ENCODE measurements at regions of chr1 and their contacts with region 1.

Region 1: DNA sequence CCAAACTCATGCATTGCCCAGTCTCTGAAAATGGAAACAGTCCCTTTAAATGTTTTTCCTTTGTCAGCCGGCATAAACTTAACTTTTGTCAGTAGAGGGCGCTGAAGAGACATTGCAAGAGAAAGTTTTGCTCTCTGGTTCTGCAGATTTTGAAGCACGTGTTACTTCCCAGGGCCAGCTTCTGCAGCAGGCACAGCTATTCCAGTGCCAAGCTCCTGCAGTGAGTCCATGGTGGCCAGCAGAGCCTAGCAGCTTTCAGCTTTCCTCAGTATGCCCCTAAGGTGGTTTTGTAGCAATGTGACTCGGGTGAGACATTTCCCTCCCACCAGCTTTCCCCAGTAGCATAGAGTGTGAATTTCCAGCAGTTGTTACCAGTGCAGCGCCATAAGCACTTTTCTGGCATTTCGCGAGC is 2.6 kb upstream of the IFI44L start:
- H3K4me3 Mint-ChIP-seq: no peak overlapping the region
- H3K27ac Mint-ChIP-seq: no peak overlapping the region
- H3K4me1 Mint-ChIP-seq: peaks cover 24% of the 10 kb centered on the region
- H3K27me3 Mint-ChIP-seq: no peaks in the 10 kb centered on the region

Region 2: GRCh38 chr1:78577257-78578100 is 40.1 kb before region 1 on chr1:
- intact Hi-C with region 1: no loop called
- H3K4me3 Mint-ChIP-seq: no peak overlapping the region
- H3K27ac Mint-ChIP-seq: no peak overlapping the region
- H3K4me1 Mint-ChIP-seq: no peaks in the 10 kb centered on the region
- H3K27me3 Mint-ChIP-seq: no peaks in the 10 kb centered on the region

Region 3: DNA sequence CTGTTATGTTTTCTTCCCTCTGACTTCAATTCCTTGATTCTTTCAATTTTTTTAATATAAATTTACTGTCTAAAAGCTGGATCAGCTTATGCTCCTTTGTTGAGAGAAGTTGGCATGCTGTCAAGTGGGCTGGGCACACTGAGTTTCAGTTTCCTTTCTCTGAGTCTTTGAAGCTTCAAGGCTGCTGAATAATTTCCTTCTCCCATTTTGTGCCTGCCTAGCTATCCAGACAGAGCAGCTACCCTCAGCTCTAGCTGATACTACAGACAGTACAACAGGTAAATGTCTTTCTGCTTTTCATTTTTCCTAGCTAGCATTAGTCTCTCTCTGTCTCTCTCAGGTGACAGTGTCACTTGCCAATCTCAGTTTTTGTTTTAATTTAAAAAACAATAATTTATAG is 32.0 kb after region 1 on chr1 and contains the start of gene IFI44:
- intact Hi-C with region 1: loop called (anchors 5 kb)
- H3K4me3 Mint-ChIP-seq: peak within 1 kb of the TSS; percentile 72
- H3K27ac Mint-ChIP-seq: peak within 1 kb of the TSS; percentile 74
- H3K4me1 Mint-ChIP-seq: peaks cover 49% of the 10 kb centered on the region
- H3K27me3 Mint-ChIP-seq: no peaks in the 10 kb centered on the region

Region 4: DNA sequence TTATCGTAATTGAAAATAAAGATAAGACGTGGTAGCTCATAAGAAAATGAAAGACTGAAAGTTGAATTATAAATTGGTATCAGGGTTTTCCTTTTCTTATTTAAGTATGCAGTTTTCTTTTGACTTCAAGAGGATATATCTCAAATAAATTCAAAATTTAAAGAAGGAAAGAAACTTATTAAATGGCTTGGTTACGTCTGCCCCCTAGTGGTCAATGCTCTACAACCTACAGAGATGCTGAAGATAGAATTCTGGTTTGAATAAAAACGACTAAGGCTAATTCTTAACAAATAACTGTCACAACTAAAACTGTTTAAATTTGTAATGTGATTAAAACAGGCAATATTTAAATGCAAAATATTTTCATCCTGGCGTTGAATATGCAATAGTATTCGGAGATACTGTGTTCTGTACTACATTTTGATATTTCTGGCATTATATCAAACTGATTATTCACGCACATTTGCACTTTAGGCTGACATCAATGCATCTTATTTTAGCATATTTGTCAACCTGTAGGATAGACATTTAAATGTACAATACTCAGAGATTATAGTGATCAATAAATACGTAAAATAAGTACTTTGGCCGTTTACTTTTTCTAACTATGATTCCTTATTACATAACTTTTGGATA is 58.8 kb after region 1 on chr1:
- intact Hi-C with region 1: loop called (anchors 1 kb)
- H3K4me3 Mint-ChIP-seq: no peak overlapping the region
- H3K27ac Mint-ChIP-seq: no peak overlapping the region
- H3K4me1 Mint-ChIP-seq: peaks cover 6% of the 10 kb centered on the region
- H3K27me3 Mint-ChIP-seq: no peaks in the 10 kb centered on the region